HepG2 (cell line): ENCODE measurements at regions of chr2 and their contacts with region 1.

Region 1: DNA sequence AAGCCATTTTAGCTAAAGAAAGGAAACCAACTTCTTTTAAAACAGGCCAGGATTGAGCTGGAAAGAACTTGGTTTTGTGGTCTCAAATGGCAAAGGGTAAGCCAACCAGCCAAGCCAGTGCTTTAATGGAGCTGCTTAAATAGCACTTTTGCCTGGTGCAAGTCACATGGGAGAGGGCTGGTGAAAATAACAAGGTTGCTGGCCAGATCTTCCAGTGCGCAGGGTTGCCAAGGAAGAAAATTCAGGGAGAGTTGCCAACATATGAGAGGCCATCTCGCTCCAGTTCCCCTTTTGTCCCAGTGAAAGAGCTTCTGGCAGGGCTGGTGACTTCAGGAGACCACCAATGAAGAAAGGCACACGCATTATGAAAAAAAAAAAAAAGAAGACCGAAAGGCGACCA is 57.3 kb downstream of the IRS1 start:
- DNase-seq: no peak
- ATAC-seq: no peak
- H3K4me3 ChIP-seq: no peak overlapping the region
- H3K27ac ChIP-seq: no peak overlapping the region
- H3K4me1 ChIP-seq: peaks cover 62% of the 10 kb centered on the region
- H3K27me3 ChIP-seq: no peaks in the 10 kb centered on the region
- CTCF ChIP-seq: no peak
- EP300 ChIP-seq: no peak
- POLR2A ChIP-seq: no peak
- RAD21 ChIP-seq: no peak

Region 2: DNA sequence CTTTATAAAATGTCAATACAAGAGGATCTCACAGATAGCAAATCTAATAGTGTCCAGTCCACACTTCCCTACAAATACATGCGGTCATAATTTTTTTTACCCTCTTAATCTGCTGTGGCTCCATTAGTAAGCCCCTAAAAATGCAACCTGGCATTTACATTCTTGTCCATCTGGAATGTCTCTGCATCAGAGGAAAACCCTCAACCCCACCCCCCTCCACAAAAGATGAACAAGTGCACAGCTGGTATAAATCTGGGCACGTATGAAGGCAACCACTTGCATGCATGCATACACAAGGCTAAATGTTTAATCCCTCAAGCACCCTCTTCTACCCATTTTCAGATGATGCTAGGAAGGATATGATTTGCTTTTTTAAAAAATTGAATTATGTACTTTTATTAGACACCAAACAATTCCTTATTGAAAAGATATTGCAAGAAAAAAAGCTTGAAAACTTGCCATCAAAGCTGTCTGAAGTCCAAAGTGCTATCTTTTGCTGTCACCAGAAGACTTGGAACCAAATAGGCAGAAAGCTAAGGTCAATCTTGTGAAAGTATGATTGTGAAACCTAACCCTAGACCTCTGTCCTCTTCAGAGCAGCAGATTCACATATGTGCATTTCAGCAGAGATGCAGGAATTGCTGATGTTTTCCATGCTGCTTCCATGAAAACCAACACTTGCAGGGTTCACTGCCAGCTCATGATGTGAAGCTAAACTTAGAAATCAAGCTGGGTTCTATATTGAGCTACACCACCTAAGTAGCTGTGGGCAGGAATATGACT is 18.3 kb after region 1 on chr2:
- CTCF ChIA-PET with region 1: no interaction called
- POLR2A ChIA-PET with region 1: interaction called, 15 read pairs
- in situ Hi-C with region 1: no loop called
- intact Hi-C with region 1: loop called (anchors 1 kb)
- DNase-seq: peak; percentile 90
- ATAC-seq: peak; percentile 99
- H3K4me3 ChIP-seq: peak overlapping the region in 1 of 3 experiments; percentile 5; a peak in 1 of 6 replicates
- H3K27ac ChIP-seq: peak overlapping the region; percentile 52
- H3K4me1 ChIP-seq: peaks cover 45% of the 10 kb centered on the region
- H3K27me3 ChIP-seq: no peaks in the 10 kb centered on the region
- CTCF ChIP-seq: 0 out of 2 replicates have a peak, but pooled peaks have one; percentile 6
- EP300 ChIP-seq: peak; percentile 95 to 97; a peak in 3 of 4 replicates
- POLR2A ChIP-seq: no peak
- RAD21 ChIP-seq: no peak; the same call in 1 of the 2 replicates

Region 3: GRCh38 chr2:226835796-226836547 is 93.6 kb after region 1 on chr2 and contains the start of gene RHBDD1:
- CTCF ChIA-PET with region 1: no interaction called
- POLR2A ChIA-PET with region 1: no interaction called
- in situ Hi-C with region 1: no loop called
- intact Hi-C with region 1: no loop called
- DNase-seq: peak; percentile 62
- ATAC-seq: peak; percentile 93
- H3K4me3 ChIP-seq: peak within 1 kb of the TSS; percentile 68 to 84 (median 77)
- H3K27ac ChIP-seq: peak within 1 kb of the TSS; percentile 59
- H3K4me1 ChIP-seq: peaks cover 36% of the 10 kb centered on the region
- H3K27me3 ChIP-seq: no peaks in the 10 kb centered on the region
- CTCF ChIP-seq: no peak
- EP300 ChIP-seq: no peak
- POLR2A ChIP-seq: peak; percentile 63 to 77
- RAD21 ChIP-seq: peak; percentile 28; the same call in 1 of the 2 replicates
- total RNA-seq, gene RHBDD1: 8.2 and 8.8 TPM in 2 replicates